Caco-2 (cell line): ENCODE measurements at regions of chr3 and their contacts with region 1.

Region 1: DNA sequence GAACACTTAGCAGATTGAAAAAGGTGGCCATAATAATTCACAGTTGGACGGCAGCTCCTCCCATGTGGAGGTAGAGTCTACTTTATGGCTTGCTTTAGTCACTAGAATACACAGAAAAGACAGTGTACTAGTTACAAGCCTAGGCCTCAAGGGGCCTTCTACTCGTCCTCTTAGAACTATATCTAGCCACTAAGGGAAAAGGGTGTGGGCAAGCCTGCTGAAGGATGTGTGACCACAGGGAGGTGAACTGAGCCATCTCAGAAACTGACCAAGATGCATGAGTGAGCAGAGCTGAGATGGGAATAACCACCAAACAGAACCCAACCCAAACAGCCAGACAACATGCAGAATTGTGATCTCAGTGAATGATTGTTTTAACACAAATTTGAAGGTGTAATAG is 335.6 kb upstream of the LMCD1 start:
- DNase-seq: peak in 1 of 2 experiments; percentile 13
- H3K4me3 ChIP-seq: no peak overlapping the region
- H3K4me3 Mint-ChIP-seq: no peak overlapping the region
- H3K27ac Mint-ChIP-seq: no peak overlapping the region
- H3K4me1 ChIP-seq: no peaks in the 10 kb centered on the region
- H3K4me1 Mint-ChIP-seq: no peaks in the 10 kb centered on the region
- H3K27me3 ChIP-seq: no peaks in the 10 kb centered on the region
- H3K27me3 Mint-ChIP-seq: peaks cover 13% of the 10 kb centered on the region
- CTCF ChIP-seq: no peak

Region 2: GRCh38 chr3:8239718-8240695 is 74.0 kb after region 1 on chr3:
- CTCF ChIA-PET with region 1: interaction called, 7 read pairs
- POLR2A ChIA-PET with region 1: no interaction called
- intact Hi-C with region 1: loop called (anchors 1 kb)
- DNase-seq: peak in 1 of 2 experiments; percentile 53
- H3K4me3 ChIP-seq: no peak overlapping the region
- H3K4me3 Mint-ChIP-seq: no peak overlapping the region
- H3K27ac Mint-ChIP-seq: no peak overlapping the region
- H3K4me1 ChIP-seq: no peaks in the 10 kb centered on the region
- H3K4me1 Mint-ChIP-seq: no peaks in the 10 kb centered on the region
- H3K27me3 ChIP-seq: no peaks in the 10 kb centered on the region
- H3K27me3 Mint-ChIP-seq: peaks cover 6% of the 10 kb centered on the region
- CTCF ChIP-seq: peak; percentile 71 to 85